ENCODE measurements at regions of chr5 and their contacts with region 1.

Region 1: GRCh38 chr5:147949711-147950573 is 43.6 kb upstream of the C5orf46 start:
- DNase-seq: peak; percentile 37
- ATAC-seq: peak; percentile 73
- H3K4me3 ChIP-seq: no peak overlapping the region
- H3K27ac ChIP-seq: no peak overlapping the region
- H3K4me1 ChIP-seq: no peaks in the 10 kb centered on the region
- H3K27me3 ChIP-seq: no peaks in the 10 kb centered on the region
- CTCF ChIP-seq: peak; percentile 65
- EP300 ChIP-seq: no peak
- POLR2A ChIP-seq: no peak
- RAD21 ChIP-seq: no peak

Region 2: DNA sequence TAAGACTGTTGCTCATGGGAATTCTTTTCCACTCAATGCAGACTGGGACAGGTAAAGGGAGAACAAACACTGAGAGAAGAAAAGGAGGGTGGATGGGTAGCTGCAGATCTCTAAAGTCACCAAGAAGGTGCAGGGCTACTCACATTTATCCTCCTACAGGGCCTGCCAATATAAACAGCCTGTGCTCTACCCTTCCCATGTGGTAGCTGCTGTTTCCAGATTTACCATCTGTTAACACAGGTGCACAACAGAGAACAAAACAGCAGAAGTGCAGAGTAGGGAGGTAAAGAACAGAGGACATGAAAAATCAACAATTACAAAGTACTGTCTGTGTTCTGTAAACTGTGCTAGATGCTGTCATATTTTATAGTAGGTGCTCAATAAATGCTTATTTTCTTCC is 193.4 kb before region 1 on chr5:
- CTCF ChIA-PET with region 1: no interaction called
- POLR2A ChIA-PET with region 1: no interaction called
- in situ Hi-C with region 1: no loop called
- intact Hi-C with region 1: no loop called
- DNase-seq: no peak
- ATAC-seq: no peak
- H3K4me3 ChIP-seq: no peak overlapping the region
- H3K27ac ChIP-seq: no peak overlapping the region
- H3K4me1 ChIP-seq: no peaks in the 10 kb centered on the region
- H3K27me3 ChIP-seq: no peaks in the 10 kb centered on the region
- CTCF ChIP-seq: no peak
- EP300 ChIP-seq: no peak
- POLR2A ChIP-seq: no peak
- RAD21 ChIP-seq: no peak

Region 3: GRCh38 chr5:148113243-148113642 is 163.3 kb after region 1 on chr5:
- CTCF ChIA-PET with region 1: no interaction called
- POLR2A ChIA-PET with region 1: no interaction called
- in situ Hi-C with region 1: loop called (anchors 10 kb)
- intact Hi-C with region 1: no loop called
- DNase-seq: no peak
- ATAC-seq: no peak
- H3K4me3 ChIP-seq: no peak overlapping the region
- H3K27ac ChIP-seq: no peak overlapping the region
- H3K4me1 ChIP-seq: no peaks in the 10 kb centered on the region
- H3K27me3 ChIP-seq: no peaks in the 10 kb centered on the region
- CTCF ChIP-seq: no peak
- EP300 ChIP-seq: no peak
- POLR2A ChIP-seq: no peak
- RAD21 ChIP-seq: no peak

Region 4: DNA sequence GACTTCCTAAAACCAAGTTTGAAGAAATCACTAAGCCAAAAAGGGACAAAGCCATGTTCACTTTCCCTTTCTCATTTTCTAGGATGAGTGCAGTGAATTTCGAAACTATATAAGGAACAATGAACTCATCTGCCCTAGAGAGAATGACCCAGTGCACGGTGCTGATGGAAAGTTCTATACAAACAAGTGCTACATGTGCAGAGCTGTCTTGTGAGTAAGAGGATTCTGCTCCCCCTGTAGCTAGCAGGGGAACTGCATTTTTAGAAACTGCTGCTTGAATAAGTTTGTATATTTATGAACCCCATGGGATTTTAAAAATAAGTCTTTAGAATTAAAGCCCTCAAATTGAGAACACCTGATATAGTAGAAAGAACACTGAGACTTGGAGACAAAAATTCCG is 175.7 kb after region 1 on chr5:
- CTCF ChIA-PET with region 1: interaction called, 3 read pairs
- POLR2A ChIA-PET with region 1: no interaction called
- in situ Hi-C with region 1: no loop called
- intact Hi-C with region 1: loop called (anchors 1 kb)
- DNase-seq: peak; percentile 8
- ATAC-seq: peak; percentile 54; the same call in 1 of the 3 replicates
- H3K4me3 ChIP-seq: no peak overlapping the region
- H3K27ac ChIP-seq: no peak overlapping the region
- H3K4me1 ChIP-seq: peaks cover 1% of the 10 kb centered on the region; the same call in 1 of the 2 replicates
- H3K27me3 ChIP-seq: no peaks in the 10 kb centered on the region
- CTCF ChIP-seq: no peak
- EP300 ChIP-seq: no peak
- POLR2A ChIP-seq: no peak
- RAD21 ChIP-seq: no peak

Region 5: DNA sequence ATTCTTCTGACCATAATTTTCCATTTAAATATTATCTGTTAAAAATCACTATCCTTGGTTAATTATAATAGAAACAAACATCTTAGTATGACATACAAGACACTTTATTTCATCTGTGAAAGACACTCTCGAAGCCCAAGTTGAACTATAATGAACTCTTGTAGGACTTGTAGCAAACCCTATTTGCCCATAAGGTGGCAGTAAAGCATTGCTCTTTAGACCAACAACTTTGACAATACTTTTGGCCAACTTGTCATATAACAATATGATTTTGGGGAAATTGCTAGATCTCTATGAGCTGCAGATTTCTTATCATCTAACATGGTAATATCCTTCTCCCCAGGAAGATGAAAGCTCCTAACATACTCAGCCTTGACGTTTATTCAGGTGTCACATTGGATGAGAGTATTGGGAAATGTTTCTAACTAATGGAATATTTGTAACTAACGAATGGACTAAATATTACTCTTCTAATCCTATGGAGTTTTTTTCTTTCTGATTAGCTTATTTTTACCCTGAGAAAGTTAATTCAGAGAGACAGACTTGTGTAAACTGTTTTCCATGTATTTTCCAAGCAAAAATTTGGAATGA is 229.4 kb after region 1 on chr5:
- CTCF ChIA-PET with region 1: no interaction called
- POLR2A ChIA-PET with region 1: no interaction called
- in situ Hi-C with region 1: no loop called
- intact Hi-C with region 1: loop called (anchors 5 kb)
- DNase-seq: peak; percentile 64
- ATAC-seq: peak; percentile 64
- H3K4me3 ChIP-seq: no peak overlapping the region
- H3K27ac ChIP-seq: no peak overlapping the region
- H3K4me1 ChIP-seq: no peaks in the 10 kb centered on the region
- H3K27me3 ChIP-seq: no peaks in the 10 kb centered on the region
- CTCF ChIP-seq: peak; percentile 76
- EP300 ChIP-seq: no peak
- POLR2A ChIP-seq: no peak
- RAD21 ChIP-seq: peak; percentile 68

Region 6: GRCh38 chr5:148374692-148375360 is 424.9 kb after region 1 on chr5:
- CTCF ChIA-PET with region 1: interaction called, 12 read pairs
- POLR2A ChIA-PET with region 1: no interaction called
- in situ Hi-C with region 1: loop called (anchors 10 kb)
- intact Hi-C with region 1: loop called (anchors 1 kb)
- DNase-seq: peak; percentile 72
- ATAC-seq: peak; percentile 100
- H3K4me3 ChIP-seq: no peak overlapping the region
- H3K27ac ChIP-seq: no peak overlapping the region
- H3K4me1 ChIP-seq: no peaks in the 10 kb centered on the region
- H3K27me3 ChIP-seq: no peaks in the 10 kb centered on the region
- CTCF ChIP-seq: peak; percentile 89
- EP300 ChIP-seq: no peak
- POLR2A ChIP-seq: no peak
- RAD21 ChIP-seq: peak; percentile 75

Region 7: DNA sequence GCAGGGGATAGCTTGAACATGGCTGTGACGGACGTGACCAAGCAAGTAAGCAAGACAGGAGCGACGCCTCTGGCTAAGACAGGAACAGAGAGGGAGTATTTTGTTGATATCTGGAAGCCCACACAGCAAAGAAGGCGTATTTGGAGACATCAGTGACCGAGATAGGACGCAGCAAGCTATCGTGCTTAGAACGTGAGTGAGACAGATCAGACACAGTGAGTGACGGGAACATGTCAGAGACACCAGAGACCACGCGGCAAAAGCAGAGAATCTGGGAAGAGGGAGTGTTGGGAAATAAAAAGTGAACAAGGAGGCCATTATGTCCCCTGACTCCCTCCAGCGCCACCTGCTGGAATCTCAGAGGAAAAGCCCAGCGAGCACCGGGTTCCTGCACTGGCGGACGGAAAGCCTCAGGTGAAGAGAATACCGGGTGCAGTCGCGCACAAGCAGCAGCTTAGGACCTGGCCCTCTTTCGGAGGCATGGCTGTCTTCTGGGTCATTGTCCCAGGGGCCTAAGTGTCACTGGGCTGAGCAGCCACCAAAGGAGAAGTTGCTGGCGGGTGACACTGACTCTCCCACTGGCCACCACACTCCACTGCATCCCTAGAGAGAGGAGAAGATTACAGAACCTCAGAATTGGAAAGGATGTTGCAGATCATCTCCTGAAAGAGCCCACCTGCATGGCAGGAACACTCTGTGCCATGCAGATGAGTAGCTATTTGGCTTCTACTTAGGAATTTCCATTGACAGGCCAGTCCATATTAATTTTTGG is 532.9 kb after region 1 on chr5:
- CTCF ChIA-PET with region 1: interaction called, 4 read pairs
- POLR2A ChIA-PET with region 1: no interaction called
- in situ Hi-C with region 1: no loop called
- intact Hi-C with region 1: loop called (anchors 2 kb)
- DNase-seq: peak; percentile 67
- ATAC-seq: peak; percentile 96
- H3K4me3 ChIP-seq: no peak overlapping the region
- H3K27ac ChIP-seq: no peak overlapping the region
- H3K4me1 ChIP-seq: peaks cover 9% of the 10 kb centered on the region; the same call in 1 of the 2 replicates
- H3K27me3 ChIP-seq: no peaks in the 10 kb centered on the region
- CTCF ChIP-seq: peak; percentile 79
- EP300 ChIP-seq: no peak
- POLR2A ChIP-seq: no peak
- RAD21 ChIP-seq: no peak